ENCODE measurements at regions of chr1 and their contacts with region 1.

Region 1: GRCh38 chr1:228478912-228479711 is 8.1 kb upstream of the RNF187 start:
- DNase-seq: peak in 1 of 35 experiments; percentile 35
- ATAC-seq: peak in 2 of 4 experiments; percentile 32 to 45
- H3K4me3 ChIP-seq: no peak overlapping the region
- H3K4me3 Mint-ChIP-seq: no peak overlapping the region
- H3K27ac ChIP-seq: peak overlapping the region; percentile 65
- H3K27ac Mint-ChIP-seq: peak overlapping the region; percentile 73 to 85
- H3K4me1 ChIP-seq: peaks cover 0 to 10% of the 10 kb centered on the region in 2 experiments
- H3K4me1 Mint-ChIP-seq: peaks cover 8 to 31% (median 17%) of the 10 kb centered on the region in 3 donors
- H3K27me3 ChIP-seq: peaks cover 0 to under 1% of the 10 kb centered on the region in 2 experiments
- H3K27me3 Mint-ChIP-seq: no peaks in the 10 kb centered on the region

Region 2: GRCh38 chr1:228664399-228664914 is 185.3 kb after region 1 on chr1:
- CTCF ChIA-PET with region 1: no interaction called
- POLR2A ChIA-PET with region 1: interaction called in 1 of 2 experiments, 13 read pairs
- DNase-seq: peak; percentile 44 to 88 (median 73)
- ATAC-seq: peak in 2 of 4 experiments; percentile 35 to 45
- H3K4me3 ChIP-seq: no peak overlapping the region
- H3K4me3 Mint-ChIP-seq: no peak overlapping the region
- H3K27ac ChIP-seq: no peak overlapping the region
- H3K27ac Mint-ChIP-seq: no peak overlapping the region
- H3K4me1 ChIP-seq: peaks cover 0 to 3% of the 10 kb centered on the region in 2 experiments
- H3K4me1 Mint-ChIP-seq: no peaks in the 10 kb centered on the region
- H3K27me3 ChIP-seq: peaks cover 0 to 6% of the 10 kb centered on the region in 2 experiments
- H3K27me3 Mint-ChIP-seq: peaks cover 3 to 19% of the 10 kb centered on the region in 2 donors

Measured in T-cell (primary cell).